Endothelial cell of umbilical vein (primary cell): ENCODE measurements at regions of chr3 and their contacts with region 1.

Region 1: DNA sequence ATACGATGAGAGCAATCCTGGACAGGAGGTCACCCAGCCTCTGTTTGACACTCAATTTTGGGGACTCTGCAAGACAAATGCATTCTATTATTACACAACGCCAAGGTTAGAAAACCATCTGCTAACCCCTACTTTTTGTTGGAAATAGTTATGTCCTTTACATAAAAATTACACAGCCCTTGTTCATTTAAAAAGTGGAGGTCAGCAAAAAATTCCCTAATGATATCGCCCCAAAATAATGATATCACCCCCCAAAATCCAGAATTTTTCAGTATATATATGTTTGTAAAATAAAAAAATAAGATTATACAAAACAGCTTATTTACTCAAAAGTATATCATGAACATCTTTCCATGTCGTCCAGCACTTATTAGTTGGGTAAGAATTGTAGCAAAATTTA is 11.4 kb downstream of the ROPN1 start:
- DNase-seq: no peak
- H3K4me3 ChIP-seq: no peak overlapping the region
- H3K27ac ChIP-seq: no peak overlapping the region
- H3K4me1 ChIP-seq: no peaks in the 10 kb centered on the region
- H3K27me3 ChIP-seq: peaks cover 38 to 58% of the 10 kb centered on the region in 2 experiments
- CTCF ChIP-seq: no peak
- POLR2A ChIP-seq: no peak

Region 2: DNA sequence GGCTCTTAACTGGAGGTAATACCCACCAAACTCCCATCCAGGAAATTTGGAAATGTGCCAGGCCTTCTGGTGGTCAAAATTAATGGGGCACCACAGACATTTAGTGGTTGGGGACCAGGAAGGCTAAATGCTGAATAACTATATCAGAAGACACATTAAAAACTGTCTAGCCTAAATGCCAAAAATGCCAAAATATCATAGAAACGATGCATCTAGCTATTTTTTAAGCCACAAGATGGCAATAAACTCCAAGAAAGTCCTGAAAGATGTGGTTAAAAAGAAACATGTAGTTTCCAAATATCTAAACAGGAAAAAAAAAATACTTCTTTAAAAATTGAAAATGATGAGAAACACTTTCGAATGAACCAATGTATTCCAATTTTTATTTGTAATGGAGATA is 39.4 kb before region 1 on chr3:
- CTCF ChIA-PET with region 1: interaction called, 12 read pairs
- POLR2A ChIA-PET with region 1: no interaction called
- dilution Hi-C with region 1: no loop called
- intact Hi-C with region 1: no loop called
- DNase-seq: no peak
- H3K4me3 ChIP-seq: no peak overlapping the region
- H3K27ac ChIP-seq: no peak overlapping the region
- H3K4me1 ChIP-seq: no peaks in the 10 kb centered on the region
- H3K27me3 ChIP-seq: no peaks in the 10 kb centered on the region
- CTCF ChIP-seq: no peak
- POLR2A ChIP-seq: no peak

Region 3: DNA sequence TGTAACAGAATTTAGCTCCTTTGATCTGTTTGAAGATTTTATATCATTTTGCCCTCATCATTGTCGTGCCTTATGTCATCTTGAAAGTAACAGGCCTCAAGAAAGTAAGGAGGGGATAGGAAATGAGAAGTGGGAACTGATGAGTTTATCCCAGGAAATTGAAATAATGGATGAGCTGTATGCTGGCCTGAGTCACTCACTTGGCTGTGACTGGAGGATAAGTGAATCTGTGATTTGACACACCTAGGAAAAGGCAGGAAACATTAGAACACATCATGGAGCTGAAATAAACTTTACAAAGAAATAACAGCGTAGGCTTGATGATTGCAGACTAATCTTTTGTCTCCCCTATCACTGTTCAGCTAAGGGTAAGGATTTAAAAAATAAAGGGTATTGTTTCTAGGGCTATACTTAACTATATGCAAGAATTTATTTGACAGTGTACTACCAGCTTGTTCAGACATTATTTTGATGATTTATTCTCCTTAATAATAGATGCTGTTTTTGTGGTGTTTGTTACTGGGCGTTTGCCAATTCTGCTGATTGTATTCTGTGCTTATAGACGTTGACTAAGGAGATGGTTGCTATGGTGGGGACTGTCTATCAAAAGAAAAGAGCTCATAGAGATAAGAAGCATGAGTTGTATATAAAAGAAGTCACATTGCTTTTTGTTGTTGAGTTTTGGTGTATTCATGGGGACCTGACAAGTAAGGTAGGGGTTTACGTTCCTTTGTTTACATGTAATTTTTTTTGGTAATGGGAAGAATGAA is 117.0 kb after region 1 on chr3:
- CTCF ChIA-PET with region 1: no interaction called
- POLR2A ChIA-PET with region 1: no interaction called
- dilution Hi-C with region 1: no loop called
- intact Hi-C with region 1: no loop called
- DNase-seq: peak; percentile 34
- H3K4me3 ChIP-seq: no peak overlapping the region
- H3K27ac ChIP-seq: no peak overlapping the region
- H3K4me1 ChIP-seq: peaks cover 14% of the 10 kb centered on the region
- H3K27me3 ChIP-seq: no peaks in the 10 kb centered on the region
- CTCF ChIP-seq: no peak
- POLR2A ChIP-seq: no peak